Heart left ventricle (tissue), 16 donors: ENCODE measurements at regions of chr2 and their contacts with region 1.

Region 1: GRCh38 chr2:197705121-197705911 is at the start of gene MARS2:
- DNase-seq: peak; percentile 94 to 97 (median 95)
- ATAC-seq: peak; percentile 91 to 97 (median 97)
- H3K4me3 ChIP-seq: peak within 1 kb of the TSS; percentile 70 to 93 (median 88)
- H3K27ac ChIP-seq: peak within 1 kb of the TSS in 11 of 12 donors; percentile 77 to 92 (median 86)
- H3K4me1 ChIP-seq: peaks cover 0 to 43% (median 26%) of the 10 kb centered on the region in 12 donors
- H3K27me3 ChIP-seq: no peaks in the 10 kb centered on the region
- CTCF ChIP-seq: peak in 3 of 12 donors; percentile 4 to 25 (median 11)
- POLR2A ChIP-seq: peak in 1 of 2 donors; percentile 66
- total RNA-seq, gene MARS2: 5.9 to 9.6 (median 7.0) TPM

Region 2: DNA sequence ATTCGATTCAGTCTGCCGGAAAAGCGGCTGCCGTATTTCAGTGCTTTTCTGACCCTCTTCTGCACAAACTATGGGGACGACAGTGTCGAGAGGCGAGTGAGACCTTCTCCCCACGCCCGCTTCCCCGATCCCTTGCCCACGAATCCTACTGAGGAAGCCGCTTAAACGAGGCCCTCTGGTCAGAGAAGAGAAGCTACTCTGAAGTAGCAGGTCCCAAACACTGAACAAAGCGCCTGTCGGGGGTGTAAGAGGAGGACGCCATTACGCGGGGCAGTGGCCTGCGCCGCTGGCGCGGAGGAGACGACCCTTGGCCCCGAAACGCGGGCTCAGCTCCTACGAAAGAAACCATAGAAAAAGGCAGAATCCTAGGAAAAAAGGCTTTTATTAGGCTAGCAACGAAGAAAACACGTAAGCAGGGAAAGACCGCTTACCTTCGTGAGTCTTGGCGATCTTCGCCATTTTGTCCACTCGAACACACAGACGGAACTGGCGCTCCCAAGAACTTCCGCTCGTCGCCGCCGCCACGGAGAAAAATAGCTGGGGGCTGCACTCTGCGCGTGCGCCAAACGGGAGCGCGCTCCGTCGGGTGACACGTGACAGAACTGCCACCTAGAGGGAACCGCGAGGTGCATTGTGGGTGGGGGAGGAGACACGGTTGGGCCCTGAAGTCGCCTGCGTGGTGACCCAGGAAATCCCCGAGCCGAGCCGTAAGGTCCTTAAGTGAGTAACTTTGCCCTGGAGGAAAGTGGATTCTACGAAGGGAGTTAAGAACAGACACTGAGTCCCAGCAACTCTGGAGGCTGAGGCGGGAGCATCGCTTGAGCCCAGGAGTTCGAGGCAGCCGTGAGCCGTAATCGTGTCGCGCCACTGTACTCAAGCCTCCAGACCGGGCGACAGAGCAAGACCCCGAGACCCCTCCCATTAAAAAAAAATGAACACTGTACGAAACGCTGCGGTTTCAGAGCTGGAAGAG is 270.5 kb before region 1 on chr2 and contains the start of gene SF3B1:
- intact Hi-C with region 1: loop called in 2 of 10 experiments (anchors 10 kb)
- DNase-seq: peak; percentile 98 to 99 (median 99)
- ATAC-seq: peak; percentile 98 to 99 (median 98)
- H3K4me3 ChIP-seq: peak within 1 kb of the TSS; percentile 63 to 99 (median 87)
- H3K27ac ChIP-seq: peak within 1 kb of the TSS; percentile 87 to 99 (median 94)
- H3K4me1 ChIP-seq: peaks cover 23 to 51% (median 45%) of the 10 kb centered on the region in 12 donors
- H3K27me3 ChIP-seq: no peaks in the 10 kb centered on the region
- CTCF ChIP-seq: no peak
- POLR2A ChIP-seq: peak in 1 of 2 donors; percentile 88
- total RNA-seq, gene SF3B1: 80.4 to 167 (median 133) TPM

Region 3: DNA sequence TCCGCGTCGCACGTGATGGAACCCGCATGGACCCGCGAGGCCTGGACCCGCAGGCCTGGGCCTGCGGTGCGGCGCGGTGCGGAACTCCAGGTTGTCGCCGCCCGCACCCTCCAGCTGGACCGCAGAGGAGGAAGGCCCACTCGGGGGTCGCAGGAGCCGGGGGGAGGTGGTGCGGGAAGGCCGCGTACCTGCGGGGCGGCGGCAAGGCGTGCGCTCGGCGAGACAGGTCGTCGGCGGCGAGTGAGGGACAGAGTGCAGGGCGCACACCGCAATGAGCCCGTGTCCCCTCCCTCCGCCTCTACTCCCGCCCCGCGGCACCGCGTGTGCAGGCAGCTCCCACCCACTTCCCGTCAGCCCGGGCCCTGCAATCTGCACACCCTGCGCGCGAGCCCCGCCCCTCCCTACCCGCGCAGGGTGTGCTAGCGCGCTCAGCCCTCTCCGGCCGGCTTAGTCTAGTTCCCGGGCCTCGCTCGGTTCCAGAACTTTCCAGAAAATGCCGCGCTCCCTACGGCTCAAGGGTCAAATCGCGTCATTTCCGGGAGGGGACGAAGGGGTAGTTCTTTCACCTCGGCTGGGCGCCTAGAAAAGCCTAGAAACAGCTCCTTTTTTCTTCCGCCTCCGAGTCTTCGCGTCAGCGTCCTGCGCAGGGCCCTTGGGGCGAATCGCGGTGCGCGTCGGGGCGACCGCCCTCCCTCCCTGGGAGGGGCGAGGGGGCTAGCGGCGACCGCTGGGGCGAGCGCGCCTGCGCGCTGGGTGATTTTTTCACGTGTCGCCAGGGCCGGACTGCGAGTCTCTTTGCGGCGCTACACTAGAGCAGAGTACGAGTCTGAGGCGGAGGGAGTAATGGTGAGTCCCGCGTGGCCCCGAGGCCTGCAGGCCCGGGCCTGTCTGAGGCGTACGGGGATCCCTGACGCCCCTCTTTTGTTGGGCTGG is 205.5 kb before region 1 on chr2 and contains the starts of genes HSPD1 and HSPE1:
- intact Hi-C with region 1: loop called in 3 of 10 experiments (anchors 1 to 10 kb)
- DNase-seq: peak; percentile 98 to 99 (median 99)
- ATAC-seq: peak; percentile 96 to 98 (median 97)
- H3K4me3 ChIP-seq: peak within 1 kb of the TSS; percentile 56 to 96 (median 81)
- H3K27ac ChIP-seq: peak within 1 kb of the TSS; percentile 79 to 99 (median 96)
- H3K4me1 ChIP-seq: peaks cover 8 to 61% (median 36%) of the 10 kb centered on the region in 12 donors
- H3K27me3 ChIP-seq: no peaks in the 10 kb centered on the region
- CTCF ChIP-seq: peak in 1 of 12 donors; percentile 14
- POLR2A ChIP-seq: peak; percentile 19 to 89
- total RNA-seq, gene HSPD1: 86.7 to 154 (median 118) TPM
- total RNA-seq, gene HSPE1: 75.0 to 136 (median 102) TPM

Region 4: GRCh38 chr2:197777823-197778407 is 72.6 kb after region 1 on chr2:
- intact Hi-C with region 1: loop called in 9 of 10 experiments (anchors 5 to 10 kb)
- DNase-seq: no peak
- ATAC-seq: no peak
- H3K4me3 ChIP-seq: no peak overlapping the region
- H3K27ac ChIP-seq: no peak overlapping the region
- H3K4me1 ChIP-seq: no peaks in the 10 kb centered on the region
- H3K27me3 ChIP-seq: no peaks in the 10 kb centered on the region
- CTCF ChIP-seq: peak; percentile 59 to 85 (median 74)
- POLR2A ChIP-seq: no peak

Region 5: DNA sequence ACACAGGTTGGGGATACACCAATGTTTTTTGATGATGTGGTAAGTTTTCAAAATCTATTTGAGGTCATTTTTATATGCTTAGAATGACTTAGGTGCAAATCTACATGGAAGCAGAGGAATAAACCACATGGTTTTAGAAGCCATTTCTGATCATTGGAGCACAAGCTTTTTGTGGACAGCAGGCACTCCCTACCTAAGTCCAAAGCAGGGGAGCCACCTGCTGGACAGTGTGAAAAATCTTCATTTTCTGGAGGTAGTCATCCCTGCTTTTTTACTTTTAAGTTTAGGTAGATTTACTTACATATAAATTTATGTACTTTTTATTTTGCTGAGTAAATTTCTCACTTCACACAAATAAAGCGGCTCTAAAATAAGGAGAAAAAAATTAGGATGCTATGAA is 422.3 kb after region 1 on chr2:
- intact Hi-C with region 1: loop called in 1 of 10 experiments (anchors 5 kb)
- DNase-seq: peak in 4 of 5 donors; percentile 38 to 60 (median 44)
- ATAC-seq: peak; percentile 66 to 87 (median 78)
- H3K4me3 ChIP-seq: no peak overlapping the region
- H3K27ac ChIP-seq: no peak overlapping the region
- H3K4me1 ChIP-seq: peaks cover 0 to 19% (median 7%) of the 10 kb centered on the region in 12 donors
- H3K27me3 ChIP-seq: no peaks in the 10 kb centered on the region
- CTCF ChIP-seq: peak; percentile 49 to 81 (median 68)
- POLR2A ChIP-seq: no peak